Calu3 (cell line): ENCODE measurements at regions of chr7 and their contacts with region 1.

Region 1: DNA sequence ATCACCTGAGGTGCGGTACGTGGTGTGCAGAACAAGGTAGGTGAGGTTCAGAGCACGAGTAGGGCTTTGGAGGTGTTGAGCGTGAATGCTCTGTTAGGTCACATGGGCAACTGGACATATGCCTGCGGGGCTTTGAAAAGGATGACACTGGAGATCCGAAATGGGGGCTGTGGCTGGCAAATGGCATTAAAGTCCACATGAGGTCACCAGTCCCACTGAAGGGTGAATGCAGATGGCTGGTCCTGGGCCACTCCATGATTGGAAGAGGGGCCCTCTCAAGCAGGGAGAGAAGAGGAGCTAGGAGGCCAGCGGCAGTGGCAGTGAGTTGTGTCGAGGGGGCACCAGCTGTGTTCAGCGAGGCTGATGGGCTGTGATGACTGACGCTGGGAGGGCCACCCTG is 254.9 kb upstream of the SHH start:
- DNase-seq: no peak
- H3K4me3 Mint-ChIP-seq: no peak overlapping the region
- H3K27ac Mint-ChIP-seq: no peak overlapping the region
- H3K4me1 Mint-ChIP-seq: peaks cover 15% of the 10 kb centered on the region
- H3K27me3 Mint-ChIP-seq: peaks cover 47% of the 10 kb centered on the region
- CTCF ChIP-seq: no peak

Region 2: DNA sequence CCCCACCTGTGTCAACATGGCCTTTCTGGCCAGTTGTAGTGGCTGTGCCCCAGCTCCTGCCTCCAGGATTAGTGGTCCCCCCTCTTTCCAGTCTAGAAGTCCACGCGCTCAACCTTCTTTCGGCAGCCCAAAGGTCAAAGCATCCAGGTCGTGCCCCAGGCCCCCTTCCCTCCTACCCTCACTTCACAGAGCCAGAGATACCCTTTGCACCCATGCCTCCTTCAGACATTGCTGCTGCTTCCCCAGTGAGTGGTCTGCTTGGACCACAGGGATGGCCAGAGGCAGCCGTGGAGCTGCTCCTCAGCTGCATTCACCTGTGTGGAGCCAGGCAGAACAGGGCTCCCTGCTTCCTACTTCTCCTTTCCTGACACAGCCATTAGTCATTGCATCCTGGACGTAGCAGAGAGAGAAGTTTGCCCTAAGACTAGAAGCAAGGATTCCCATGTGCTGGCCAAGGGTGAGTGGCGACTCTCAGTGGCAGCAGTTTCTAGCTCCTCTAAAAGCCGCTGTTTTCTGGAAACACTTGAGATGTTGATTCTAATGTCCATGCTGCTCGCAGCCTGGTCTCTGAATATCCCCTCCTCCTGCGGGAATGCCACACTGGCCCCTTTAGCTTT is 11.8 kb before region 1 on chr7:
- CTCF ChIA-PET with region 1: no interaction called
- intact Hi-C with region 1: loop called (anchors 1 kb)
- DNase-seq: no peak
- H3K4me3 Mint-ChIP-seq: no peak overlapping the region
- H3K27ac Mint-ChIP-seq: no peak overlapping the region
- H3K4me1 Mint-ChIP-seq: no peaks in the 10 kb centered on the region
- H3K27me3 Mint-ChIP-seq: peaks cover 57% of the 10 kb centered on the region
- CTCF ChIP-seq: no peak

Region 3: DNA sequence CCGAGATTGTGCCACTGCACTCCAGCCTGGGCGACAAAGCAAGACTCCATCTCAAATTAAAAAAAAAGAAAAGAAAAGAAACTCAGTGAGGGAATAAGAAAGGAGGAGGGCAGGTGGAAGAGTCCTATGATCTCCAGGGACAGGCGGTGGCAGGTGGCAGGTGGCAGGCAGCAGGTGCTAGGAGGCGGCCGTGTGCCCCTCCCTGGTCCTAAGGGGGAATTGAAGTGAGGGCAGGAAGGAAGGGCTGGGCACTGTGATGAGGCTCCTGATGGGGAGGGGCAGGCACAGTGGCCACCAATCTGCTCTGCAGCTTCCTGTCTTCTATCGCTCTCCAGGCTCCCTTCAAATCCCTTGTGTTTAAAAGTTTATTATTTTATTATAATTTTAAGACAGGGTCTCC is 1030.4 kb after region 1 on chr7:
- CTCF ChIA-PET with region 1: no interaction called
- intact Hi-C with region 1: no loop called
- DNase-seq: no peak
- H3K4me3 Mint-ChIP-seq: no peak overlapping the region
- H3K27ac Mint-ChIP-seq: no peak overlapping the region
- H3K4me1 Mint-ChIP-seq: no peaks in the 10 kb centered on the region
- H3K27me3 Mint-ChIP-seq: peaks cover 34% of the 10 kb centered on the region
- CTCF ChIP-seq: no peak